Lower lobe of right lung (tissue), 2 donors: ENCODE measurements at regions of chr11 and their contacts with region 1.

Region 1: GRCh38 chr11:45655347-45655756 is 10.1 kb downstream of the CHST1 start:
- DNase-seq: peak; percentile 78
- ATAC-seq: peak; percentile 64 to 77
- H3K4me3 ChIP-seq: no peak overlapping the region
- H3K27ac ChIP-seq: no peak overlapping the region
- H3K4me1 ChIP-seq: peaks cover 23% of the 10 kb centered on the region
- H3K27me3 ChIP-seq: peaks cover 34% of the 10 kb centered on the region
- CTCF ChIP-seq: peak; percentile 92

Region 2: GRCh38 chr11:45371251-45372115 is 283.9 kb before region 1 on chr11:
- intact Hi-C with region 1: loop called (anchors 10 kb)
- DNase-seq: peak; percentile 70
- ATAC-seq: peak; percentile 76 to 81
- H3K4me3 ChIP-seq: peak overlapping the region; percentile 23
- H3K27ac ChIP-seq: no peak overlapping the region
- H3K4me1 ChIP-seq: peaks cover 15% of the 10 kb centered on the region
- H3K27me3 ChIP-seq: peaks cover 18% of the 10 kb centered on the region
- CTCF ChIP-seq: peak; percentile 93

Region 3: DNA sequence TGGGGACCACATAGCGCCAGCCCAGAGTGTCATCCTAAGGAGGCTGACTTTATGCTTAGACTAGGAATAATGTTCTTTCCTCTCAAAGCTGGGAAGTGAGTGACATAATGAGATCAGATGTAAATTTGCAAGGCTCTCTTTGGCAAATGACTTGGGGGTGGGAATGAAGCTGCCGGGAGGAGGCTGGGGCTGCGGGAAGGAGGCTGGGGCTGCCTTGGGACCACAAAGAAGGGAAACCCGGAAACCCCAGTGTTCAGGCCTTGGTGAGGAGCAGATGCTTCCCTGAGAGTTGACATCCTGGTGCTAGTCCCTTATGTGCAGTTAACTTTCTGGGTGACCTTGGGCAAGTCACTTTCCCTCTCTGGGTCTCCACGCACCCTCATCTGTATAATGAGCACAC is 171.9 kb before region 1 on chr11:
- intact Hi-C with region 1: no loop called
- DNase-seq: no peak
- ATAC-seq: no peak
- H3K4me3 ChIP-seq: no peak overlapping the region
- H3K27ac ChIP-seq: no peak overlapping the region
- H3K4me1 ChIP-seq: no peaks in the 10 kb centered on the region
- H3K27me3 ChIP-seq: no peaks in the 10 kb centered on the region
- CTCF ChIP-seq: no peak

Region 4: GRCh38 chr11:45982656-45983470 is 327.5 kb after region 1 on chr11:
- intact Hi-C with region 1: no loop called
- DNase-seq: no peak
- ATAC-seq: peak; percentile 42 to 73
- H3K4me3 ChIP-seq: no peak overlapping the region
- H3K27ac ChIP-seq: no peak overlapping the region
- H3K4me1 ChIP-seq: peaks cover 19% of the 10 kb centered on the region
- H3K27me3 ChIP-seq: no peaks in the 10 kb centered on the region
- CTCF ChIP-seq: no peak

Region 5: GRCh38 chr11:46003574-46003973 is 348.2 kb after region 1 on chr11:
- intact Hi-C with region 1: no loop called
- DNase-seq: no peak
- ATAC-seq: no peak
- H3K4me3 ChIP-seq: no peak overlapping the region
- H3K27ac ChIP-seq: no peak overlapping the region
- H3K4me1 ChIP-seq: peaks cover 6% of the 10 kb centered on the region
- H3K27me3 ChIP-seq: no peaks in the 10 kb centered on the region
- CTCF ChIP-seq: no peak

Region 6: DNA sequence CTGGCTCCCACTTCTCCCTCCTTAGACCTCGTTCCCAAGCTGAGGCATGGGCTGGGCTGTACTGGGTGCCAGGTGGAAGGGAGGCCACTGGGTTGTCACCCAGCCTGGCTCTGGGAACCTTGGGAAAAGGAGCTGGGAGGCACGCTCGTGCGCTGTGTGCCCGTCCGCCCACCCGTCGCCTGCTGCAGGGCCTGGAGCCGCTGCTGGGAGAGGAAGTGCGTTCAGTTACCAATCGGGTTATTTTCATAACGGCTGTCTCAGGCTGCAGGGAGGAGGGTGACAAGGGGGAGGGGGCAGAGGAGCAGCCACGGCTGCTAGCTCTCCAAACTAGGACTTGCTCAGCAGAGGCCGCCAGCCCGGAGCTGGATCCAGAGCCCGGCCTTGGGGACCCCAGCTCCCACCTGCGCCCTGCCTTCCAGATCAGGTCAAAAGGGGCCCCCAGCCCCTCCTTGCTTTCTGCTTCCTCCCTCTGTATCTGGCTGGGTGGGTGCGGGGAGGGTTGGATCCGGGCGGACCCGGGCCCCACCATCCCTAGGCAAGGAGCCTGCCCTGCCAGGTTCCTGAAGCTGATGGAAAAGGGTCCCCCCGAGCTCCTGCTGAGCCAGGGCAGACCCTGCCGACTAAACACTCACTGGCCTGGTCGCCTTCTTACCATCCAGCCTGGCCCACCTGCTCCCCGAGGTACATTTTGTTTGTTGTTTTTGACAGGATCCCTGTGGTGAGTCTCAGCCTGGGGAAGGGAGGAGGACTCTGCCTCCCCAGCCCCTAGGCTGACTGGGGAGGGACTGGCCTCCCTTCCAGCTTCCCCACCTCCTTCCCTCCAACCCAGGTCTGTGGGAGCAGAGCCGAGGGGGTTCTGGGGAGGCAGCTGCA is 706.2 kb after region 1 on chr11:
- intact Hi-C with region 1: no loop called
- DNase-seq: peak; percentile 83
- ATAC-seq: peak; percentile 77 to 83
- H3K4me3 ChIP-seq: peak overlapping the region; percentile 50
- H3K27ac ChIP-seq: peak overlapping the region; percentile 89
- H3K4me1 ChIP-seq: peaks cover 55% of the 10 kb centered on the region
- H3K27me3 ChIP-seq: no peaks in the 10 kb centered on the region
- CTCF ChIP-seq: no peak